Tibial artery (tissue), 4 donors: ENCODE measurements at regions of chr11 and their contacts with region 1.

Region 1: GRCh38 chr11:35391922-35392813 is 27.2 kb downstream of the SLC1A2 start:
- DNase-seq: peak; percentile 67 to 85
- H3K4me3 ChIP-seq: peak overlapping the region; percentile 13 to 44
- H3K27ac ChIP-seq: peak overlapping the region in 1 of 2 donors; percentile 11
- H3K4me1 ChIP-seq: peaks cover 0 to 29% (median 14%) of the 10 kb centered on the region in 4 donors
- H3K27me3 ChIP-seq: no peaks in the 10 kb centered on the region
- CTCF ChIP-seq: peak; percentile 85 to 93

Region 2: DNA sequence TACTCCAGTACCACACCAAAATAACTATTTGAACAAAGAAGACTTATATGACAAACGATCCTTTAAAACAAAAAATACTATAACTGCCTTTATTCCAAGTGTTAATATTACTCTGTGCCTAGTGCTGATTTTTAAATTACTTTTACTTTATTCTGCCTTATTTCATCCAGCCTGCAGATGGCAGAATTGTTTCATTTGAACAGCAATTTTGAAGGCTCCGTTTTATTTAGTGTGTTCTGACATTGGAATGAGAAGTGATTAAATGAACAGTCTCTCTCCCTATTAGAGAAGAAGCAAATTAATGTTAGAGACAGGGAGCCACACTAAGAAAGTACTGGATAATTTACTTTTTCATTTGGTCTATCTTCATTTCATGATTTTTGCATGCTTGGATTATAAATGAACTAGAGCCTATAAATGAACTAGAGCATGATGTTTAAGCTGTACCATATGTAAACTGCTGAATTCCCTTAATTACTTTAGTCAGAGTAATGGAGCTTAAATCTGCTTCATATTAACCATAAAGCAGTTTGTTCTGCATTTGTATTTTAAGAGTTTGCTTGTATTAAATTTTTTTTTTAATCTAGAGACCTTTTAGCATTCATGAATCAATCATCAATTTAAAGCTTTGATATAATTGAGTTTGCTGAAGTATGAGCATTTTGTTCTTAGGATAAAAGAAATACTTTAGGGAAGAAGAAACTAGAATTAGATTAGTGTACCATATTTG is 465.9 kb before region 1 on chr11:
- intact Hi-C with region 1: loop called (anchors 5 kb)
- DNase-seq: no peak
- H3K4me3 ChIP-seq: no peak overlapping the region
- H3K27ac ChIP-seq: no peak overlapping the region
- H3K4me1 ChIP-seq: peaks cover 0 to 55% (median 20%) of the 10 kb centered on the region in 4 donors
- H3K27me3 ChIP-seq: no peaks in the 10 kb centered on the region
- CTCF ChIP-seq: peak; percentile 66 to 79

Region 3: DNA sequence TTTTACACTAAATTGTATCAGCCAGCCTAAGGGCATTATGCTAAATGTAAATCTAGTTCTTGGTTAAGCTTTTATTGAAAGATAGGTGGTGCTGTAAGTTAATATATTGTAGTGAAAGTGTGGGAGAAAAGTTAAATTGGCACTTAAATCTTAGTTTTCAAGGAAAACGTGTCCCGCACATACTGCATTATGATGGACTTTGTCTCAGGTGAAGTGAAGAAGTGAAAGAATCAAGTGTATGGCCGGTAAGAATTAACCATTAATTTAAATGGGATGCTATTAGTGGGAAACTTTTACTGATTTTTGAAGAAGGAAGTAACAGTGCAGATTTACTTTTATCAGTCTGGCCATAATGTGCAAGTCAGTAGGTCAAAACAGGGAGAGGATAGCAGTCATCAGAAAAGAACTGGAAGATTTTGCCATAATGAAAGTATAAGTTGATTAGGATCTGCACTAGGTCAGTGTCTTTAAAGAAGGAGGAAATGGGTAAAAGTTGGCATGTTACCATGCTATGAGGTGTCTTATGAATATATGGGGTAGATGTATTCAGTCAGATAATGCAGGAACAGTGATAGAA is 394.1 kb before region 1 on chr11:
- intact Hi-C with region 1: loop called (anchors 2 kb)
- DNase-seq: no peak
- H3K4me3 ChIP-seq: no peak overlapping the region
- H3K27ac ChIP-seq: no peak overlapping the region
- H3K4me1 ChIP-seq: peaks cover 0 to 8% (median 0%) of the 10 kb centered on the region in 4 donors
- H3K27me3 ChIP-seq: no peaks in the 10 kb centered on the region
- CTCF ChIP-seq: peak; percentile 37 to 48

Region 4: GRCh38 chr11:35427071-35427470 is 34.9 kb after region 1 on chr11:
- intact Hi-C with region 1: no loop called
- DNase-seq: peak in 1 of 2 donors; percentile 77
- H3K4me3 ChIP-seq: no peak overlapping the region
- H3K27ac ChIP-seq: peak overlapping the region; percentile 8 to 12
- H3K4me1 ChIP-seq: peaks cover 0 to 37% (median 28%) of the 10 kb centered on the region in 4 donors
- H3K27me3 ChIP-seq: peaks cover 0 to 15% of the 10 kb centered on the region in 2 donors
- CTCF ChIP-seq: no peak

Region 5: DNA sequence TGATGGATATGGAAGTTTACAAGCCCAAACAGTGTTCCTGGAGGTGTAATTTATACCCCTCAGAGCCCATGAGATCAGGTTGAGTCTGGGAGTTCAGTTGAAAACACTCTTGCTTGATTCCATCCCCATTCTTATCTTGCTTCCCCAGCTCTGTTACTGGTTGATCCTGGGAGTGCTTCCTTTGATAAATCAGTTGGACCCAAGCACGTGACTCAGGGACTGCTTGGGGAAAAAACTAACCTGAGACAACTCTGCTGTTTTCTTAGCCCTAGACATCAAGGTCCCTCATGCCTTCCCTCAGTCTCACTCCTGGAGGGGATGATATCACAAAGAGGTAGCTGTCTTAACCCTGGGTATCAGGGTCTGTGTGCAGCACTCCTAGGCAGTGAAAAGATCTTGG is 62.2 kb after region 1 on chr11:
- intact Hi-C with region 1: no loop called
- DNase-seq: no peak
- H3K4me3 ChIP-seq: no peak overlapping the region
- H3K27ac ChIP-seq: no peak overlapping the region
- H3K4me1 ChIP-seq: no peaks in the 10 kb centered on the region
- H3K27me3 ChIP-seq: peaks cover 0 to 12% of the 10 kb centered on the region in 2 donors
- CTCF ChIP-seq: no peak

Region 6: DNA sequence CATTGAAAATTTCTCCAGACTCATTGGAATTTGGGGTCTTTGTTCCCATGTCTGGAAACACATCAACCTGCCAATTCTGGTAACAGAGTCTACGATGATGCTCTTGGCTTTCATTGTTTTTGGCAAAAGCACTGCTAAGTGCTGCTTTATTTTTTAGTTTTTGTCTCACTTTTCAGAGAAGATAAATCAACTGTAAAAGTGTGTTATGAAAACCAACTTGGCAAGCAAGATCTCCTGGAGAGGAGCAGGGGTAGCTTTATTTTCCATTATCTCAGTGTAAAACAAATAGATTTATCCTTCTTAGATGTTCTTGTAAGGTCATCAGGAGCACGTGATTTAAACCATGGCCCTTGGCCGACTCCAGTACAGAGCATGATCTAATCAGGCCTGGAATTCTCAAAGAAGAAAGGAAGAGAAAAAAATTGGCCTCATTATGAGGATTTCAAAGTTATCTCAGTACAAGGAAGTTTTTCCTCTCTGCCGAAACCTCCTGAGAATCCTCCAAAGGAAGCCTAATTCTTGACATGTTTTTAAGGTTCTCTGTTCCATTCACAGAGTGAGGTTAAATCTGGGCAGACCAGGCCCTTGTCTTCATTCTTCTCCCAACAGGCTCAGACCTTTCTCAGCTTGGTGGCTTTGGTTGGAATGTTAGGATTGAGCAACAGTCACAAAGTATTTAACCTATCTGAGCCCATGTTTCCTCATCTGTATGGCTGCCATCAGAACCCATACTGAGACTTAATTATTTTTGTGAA is 149.6 kb after region 1 on chr11:
- intact Hi-C with region 1: no loop called
- DNase-seq: peak; percentile 75
- H3K4me3 ChIP-seq: no peak overlapping the region
- H3K27ac ChIP-seq: peak overlapping the region; percentile 20 to 33
- H3K4me1 ChIP-seq: peaks cover 0 to 22% (median 6%) of the 10 kb centered on the region in 4 donors
- H3K27me3 ChIP-seq: no peaks in the 10 kb centered on the region
- CTCF ChIP-seq: no peak